ENCODE measurements at regions of chr2 and their contacts with region 1.

Region 1: GRCh38 chr2:40554668-40555285 is 102.9 kb upstream of the SLC8A1 start:
- DNase-seq: peak; percentile 15
- CTCF ChIP-seq: peak; percentile 81

Region 2: GRCh38 chr2:39913648-39914461 is 640.9 kb before region 1 on chr2:
- CTCF ChIA-PET with region 1: interaction called, 95 read pairs
- POLR2A ChIA-PET with region 1: no interaction called
- DNase-seq: peak; percentile 25
- CTCF ChIP-seq: peak; percentile 66

Region 3: DNA sequence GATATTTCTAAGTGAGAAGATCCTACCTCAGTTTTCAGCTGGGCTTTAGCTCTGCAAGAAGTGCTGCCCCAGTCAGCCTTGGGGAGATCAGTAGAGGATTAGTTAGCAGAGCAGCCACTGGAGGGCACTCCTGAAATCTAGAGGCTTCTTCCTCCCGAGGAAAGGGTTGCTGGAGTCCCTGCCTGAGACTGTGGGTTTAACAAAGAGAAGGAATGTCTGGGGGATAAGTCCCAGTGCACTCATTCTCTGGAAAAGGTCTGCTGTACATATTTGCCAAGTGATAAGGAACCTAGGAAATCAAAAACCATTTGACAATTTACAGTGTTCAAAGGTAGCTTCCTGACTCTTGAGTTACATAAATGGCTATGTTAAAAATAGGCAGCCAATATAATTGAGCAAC is 310.1 kb before region 1 on chr2:
- CTCF ChIA-PET with region 1: interaction called, 16 read pairs
- POLR2A ChIA-PET with region 1: no interaction called
- DNase-seq: peak; percentile 16
- CTCF ChIP-seq: peak; percentile 61

Region 4: DNA sequence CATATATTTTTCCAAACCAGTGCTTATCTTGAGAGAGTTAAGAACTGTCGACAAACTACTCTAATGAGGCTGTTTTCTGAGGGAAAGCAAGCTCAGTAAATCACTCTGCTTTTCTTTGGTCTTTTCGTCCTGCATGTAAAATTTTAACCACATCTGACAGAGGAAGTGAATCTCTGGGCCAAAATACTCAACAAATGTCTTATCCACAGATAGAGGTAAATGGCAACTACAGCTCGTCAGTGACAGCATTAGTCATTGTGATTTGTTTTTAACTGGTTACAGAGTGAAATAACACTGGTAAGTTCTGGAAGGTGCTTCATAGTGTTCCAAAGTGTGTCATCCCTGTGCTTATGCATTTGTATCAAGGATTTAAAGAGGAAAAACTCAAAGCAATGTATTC is 20.2 kb before region 1 on chr2:
- CTCF ChIA-PET with region 1: interaction called, 12 read pairs
- POLR2A ChIA-PET with region 1: no interaction called
- DNase-seq: no peak
- CTCF ChIP-seq: no peak

Region 5: DNA sequence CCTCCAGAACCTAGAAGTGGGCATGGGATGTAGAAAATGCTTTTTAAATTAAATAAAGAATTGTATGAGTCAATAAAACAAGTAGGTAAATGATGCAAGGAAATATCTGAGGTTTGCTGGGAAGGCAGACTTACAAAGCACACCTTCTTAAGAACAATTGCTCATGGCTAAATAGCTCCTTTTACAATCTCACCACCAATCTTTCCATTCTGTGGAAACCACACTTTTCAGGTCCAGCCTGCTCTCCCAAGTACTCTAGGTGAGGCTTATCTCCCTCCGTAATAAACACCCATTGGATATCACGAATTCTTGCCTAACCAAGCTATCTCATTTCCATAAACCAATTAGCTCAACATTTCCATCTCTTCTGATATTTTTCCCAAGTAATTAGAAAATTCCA is 11.4 kb before region 1 on chr2:
- CTCF ChIA-PET with region 1: interaction called, 31 read pairs
- POLR2A ChIA-PET with region 1: no interaction called
- DNase-seq: no peak
- CTCF ChIP-seq: no peak

Region 6: GRCh38 chr2:40579247-40579646 is 24.5 kb after region 1 on chr2:
- CTCF ChIA-PET with region 1: interaction called, 51 read pairs
- POLR2A ChIA-PET with region 1: no interaction called
- DNase-seq: no peak
- CTCF ChIP-seq: no peak

Region 7: DNA sequence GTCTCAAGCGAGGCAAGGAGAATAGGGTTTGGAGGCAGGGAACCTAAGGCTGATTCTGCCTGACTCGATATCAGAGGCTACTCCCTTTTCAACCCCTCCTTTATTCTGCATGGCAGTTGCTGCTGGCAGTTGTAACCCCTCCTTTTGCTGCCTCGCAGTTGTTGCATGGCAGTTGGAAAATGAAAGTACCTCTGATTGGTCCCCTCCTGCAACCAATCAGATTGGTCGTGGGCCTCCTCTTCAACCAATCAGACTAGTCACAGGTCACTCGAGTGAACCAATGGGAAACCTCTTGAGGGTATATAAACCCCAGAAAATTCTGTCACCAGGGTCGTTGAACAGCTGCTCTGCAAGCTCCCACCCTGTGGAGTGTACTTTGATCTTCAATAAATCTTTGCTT is 191.4 kb after region 1 on chr2:
- CTCF ChIA-PET with region 1: no interaction called
- POLR2A ChIA-PET with region 1: no interaction called
- DNase-seq: no peak
- CTCF ChIP-seq: no peak

Measured in GM10248 (cell line).